Tibial artery (tissue), 4 donors: ENCODE measurements at regions of chr3 and their contacts with region 1.

Region 1: DNA sequence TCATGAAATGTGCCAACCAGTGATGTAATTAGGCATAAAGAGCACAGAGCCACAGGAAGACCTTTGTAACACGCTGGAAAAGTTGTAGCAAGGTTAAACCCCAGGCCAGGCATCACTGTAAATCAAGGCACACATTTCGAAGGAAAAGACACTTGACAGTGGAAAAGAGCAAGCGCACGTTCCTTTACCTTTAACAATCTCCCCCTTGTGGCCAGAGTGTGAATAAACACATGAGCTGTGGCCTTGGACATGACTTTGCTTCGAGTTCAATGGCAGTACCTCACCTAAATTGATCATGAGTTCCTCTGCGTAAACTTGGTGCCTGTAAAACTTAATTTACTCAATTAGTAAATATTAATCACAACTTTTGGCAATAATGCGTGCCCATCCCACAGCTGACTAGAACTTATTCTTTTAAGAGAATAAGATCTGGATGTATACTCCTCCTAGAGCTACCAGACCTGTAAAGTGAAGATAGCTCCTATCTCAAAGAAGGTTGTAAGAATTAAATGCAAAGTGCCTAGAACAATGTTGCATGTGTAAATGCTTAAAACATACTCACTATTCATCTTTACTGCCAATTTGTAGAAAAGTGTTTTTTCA is 757.0 kb upstream of the NECTIN3 start:
- DNase-seq: peak in 1 of 2 donors; percentile 50
- H3K4me3 ChIP-seq: no peak overlapping the region
- H3K27ac ChIP-seq: no peak overlapping the region
- H3K4me1 ChIP-seq: no peaks in the 10 kb centered on the region
- H3K27me3 ChIP-seq: no peaks in the 10 kb centered on the region
- CTCF ChIP-seq: peak; percentile 70

Region 2: GRCh38 chr3:109731620-109732473 is 582.8 kb before region 1 on chr3:
- intact Hi-C with region 1: loop called (anchors 10 kb)
- DNase-seq: peak in 1 of 2 donors; percentile 59
- H3K4me3 ChIP-seq: no peak overlapping the region
- H3K27ac ChIP-seq: no peak overlapping the region
- H3K4me1 ChIP-seq: no peaks in the 10 kb centered on the region
- H3K27me3 ChIP-seq: no peaks in the 10 kb centered on the region
- CTCF ChIP-seq: peak; percentile 82